Naive thymus-derived CD4-positive, alpha-beta T cell (primary cell): ENCODE measurements at regions of chr17 and their contacts with region 1.

Region 1: GRCh38 chr17:48610282-48611211 is at the start of gene HOXB7:
- DNase-seq: peak in 3 of 9 donors; percentile 21 to 73 (median 32)
- ATAC-seq: peak; percentile 36
- H3K4me3 ChIP-seq: peak within 1 kb of the TSS; percentile 81
- H3K4me3 Mint-ChIP-seq: peak within 1 kb of the TSS; percentile 74 to 97 (median 90)
- H3K27ac ChIP-seq: no peak within 1 kb of the TSS
- H3K27ac Mint-ChIP-seq: peak within 1 kb of the TSS in 6 of 9 donors; percentile 26 to 77 (median 70)
- H3K4me1 ChIP-seq: peaks cover 28 to 42% of the 10 kb centered on the region in 2 donors
- H3K4me1 Mint-ChIP-seq: peaks cover 30 to 49% (median 44%) of the 10 kb centered on the region in 7 donors
- H3K27me3 ChIP-seq: peaks cover 11 to 46% of the 10 kb centered on the region in 2 donors
- H3K27me3 Mint-ChIP-seq: peaks cover 73 to 83% (median 77%) of the 10 kb centered on the region in 5 donors
- total RNA-seq, gene HOXB7: 0.31 TPM in 1 of 5 experiments, not detected in the others

Region 2: DNA sequence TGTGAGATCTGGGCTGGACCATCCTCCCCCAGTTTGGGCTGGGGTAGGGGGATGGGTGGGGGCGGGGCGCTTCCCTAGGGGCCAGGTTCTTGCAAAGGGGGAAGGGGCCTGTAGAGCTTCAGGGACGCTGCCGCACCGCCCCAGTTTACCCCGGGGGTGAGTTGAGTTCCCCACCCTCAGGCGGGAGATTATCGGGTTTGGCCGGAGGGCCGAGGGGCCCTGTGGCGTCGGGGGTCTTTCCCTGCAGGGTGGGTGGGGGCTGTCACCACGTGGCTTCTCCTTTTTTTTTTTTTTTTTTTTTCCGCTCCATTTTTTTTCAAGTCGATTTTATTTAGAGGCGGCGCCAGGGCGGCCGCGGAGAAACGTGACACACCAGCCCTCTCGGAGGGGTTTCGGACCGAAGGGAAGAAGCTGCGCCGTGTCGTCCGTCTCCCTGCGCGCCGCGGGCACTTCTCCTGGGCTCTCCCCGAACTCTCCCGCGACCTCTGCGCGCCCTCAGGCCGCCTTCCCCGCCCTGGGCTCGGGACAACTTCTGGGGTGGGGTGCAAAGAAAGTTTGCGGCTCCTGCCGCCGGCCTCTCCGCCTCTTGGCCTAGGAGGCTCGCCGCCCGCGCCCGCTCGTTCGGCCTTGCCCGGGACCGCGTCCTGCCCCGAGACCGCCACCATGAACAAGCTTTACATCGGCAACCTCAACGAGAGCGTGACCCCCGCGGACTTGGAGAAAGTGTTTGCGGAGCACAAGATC is 386.7 kb after region 1 on chr17 and contains the start of gene IGF2BP1:
- CTCF ChIA-PET with region 1: no interaction called
- POLR2A ChIA-PET with region 1: no interaction called
- intact Hi-C with region 1: loop called in 1 of 2 experiments (anchors 5 kb)
- DNase-seq: peak in 4 of 9 donors; percentile 15 to 31 (median 23)
- ATAC-seq: peak; percentile 24
- H3K4me3 ChIP-seq: peak within 1 kb of the TSS; percentile 12
- H3K4me3 Mint-ChIP-seq: peak within 1 kb of the TSS; percentile 64 to 82 (median 72)
- H3K27ac ChIP-seq: no peak within 1 kb of the TSS
- H3K27ac Mint-ChIP-seq: peak within 1 kb of the TSS in 2 of 9 donors; percentile 65 to 82
- H3K4me1 ChIP-seq: peaks cover 8 to 22% of the 10 kb centered on the region in 2 donors
- H3K4me1 Mint-ChIP-seq: peaks cover 14 to 40% (median 23%) of the 10 kb centered on the region in 7 donors
- H3K27me3 ChIP-seq: peaks cover 35 to 74% of the 10 kb centered on the region in 2 donors
- H3K27me3 Mint-ChIP-seq: peaks cover 79 to 88% (median 84%) of the 10 kb centered on the region in 5 donors
- total RNA-seq, gene IGF2BP1: not detected